ENCODE measurements at regions of chr15 and their contacts with region 1.

Region 1: GRCh38 chr15:25508369-25509002 is 69.7 kb upstream of the UBE3A start:
- DNase-seq: no peak
- H3K4me3 ChIP-seq: no peak overlapping the region
- CTCF ChIP-seq: no peak
- POLR2A ChIP-seq: no peak

Region 2: DNA sequence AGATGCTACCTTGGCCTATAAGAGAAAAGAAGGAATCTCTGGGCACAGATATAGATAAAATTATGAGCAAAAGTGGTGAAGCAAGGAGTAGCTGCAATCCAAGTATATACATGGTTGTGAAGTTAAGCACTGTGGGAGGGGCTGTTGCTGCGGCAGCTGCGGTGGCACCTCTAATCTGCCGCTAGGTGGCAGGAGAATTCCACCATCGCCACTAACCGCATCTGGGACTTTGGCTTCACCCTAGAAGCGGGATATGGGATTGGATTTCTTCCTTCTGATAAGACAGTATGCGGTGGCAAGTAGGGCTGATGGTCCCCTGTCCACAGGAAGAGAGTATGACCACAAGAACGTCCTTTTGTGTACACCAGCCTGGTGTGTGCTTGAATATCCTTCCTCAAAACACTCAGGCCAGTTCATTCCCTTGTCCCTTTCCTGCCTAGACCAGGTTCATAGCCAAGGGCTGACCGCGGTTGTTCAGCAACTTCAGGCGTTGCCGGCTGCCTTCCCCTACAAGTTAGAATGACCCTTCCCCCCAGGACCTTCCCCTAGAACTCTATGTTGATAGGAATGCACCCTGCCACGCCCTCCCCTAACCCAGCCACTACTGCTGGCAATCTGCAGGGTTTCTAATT is 1866.0 kb before region 1 on chr15:
- intact Hi-C with region 1: loop called (anchors 10 kb)
- DNase-seq: peak in 1 of 2 donors; percentile 17
- H3K4me3 ChIP-seq: no peak overlapping the region
- CTCF ChIP-seq: peak in 1 of 3 donors; percentile 37
- POLR2A ChIP-seq: no peak

Region 3: GRCh38 chr15:25378501-25378901 is 130.0 kb before region 1 on chr15:
- intact Hi-C with region 1: no loop called
- DNase-seq: no peak
- H3K4me3 ChIP-seq: no peak overlapping the region
- CTCF ChIP-seq: no peak
- POLR2A ChIP-seq: no peak

Region 4: GRCh38 chr15:25481207-25481859 is 27.2 kb before region 1 on chr15:
- intact Hi-C with region 1: no loop called
- DNase-seq: no peak
- H3K4me3 ChIP-seq: no peak overlapping the region
- CTCF ChIP-seq: no peak
- POLR2A ChIP-seq: no peak

Region 5: DNA sequence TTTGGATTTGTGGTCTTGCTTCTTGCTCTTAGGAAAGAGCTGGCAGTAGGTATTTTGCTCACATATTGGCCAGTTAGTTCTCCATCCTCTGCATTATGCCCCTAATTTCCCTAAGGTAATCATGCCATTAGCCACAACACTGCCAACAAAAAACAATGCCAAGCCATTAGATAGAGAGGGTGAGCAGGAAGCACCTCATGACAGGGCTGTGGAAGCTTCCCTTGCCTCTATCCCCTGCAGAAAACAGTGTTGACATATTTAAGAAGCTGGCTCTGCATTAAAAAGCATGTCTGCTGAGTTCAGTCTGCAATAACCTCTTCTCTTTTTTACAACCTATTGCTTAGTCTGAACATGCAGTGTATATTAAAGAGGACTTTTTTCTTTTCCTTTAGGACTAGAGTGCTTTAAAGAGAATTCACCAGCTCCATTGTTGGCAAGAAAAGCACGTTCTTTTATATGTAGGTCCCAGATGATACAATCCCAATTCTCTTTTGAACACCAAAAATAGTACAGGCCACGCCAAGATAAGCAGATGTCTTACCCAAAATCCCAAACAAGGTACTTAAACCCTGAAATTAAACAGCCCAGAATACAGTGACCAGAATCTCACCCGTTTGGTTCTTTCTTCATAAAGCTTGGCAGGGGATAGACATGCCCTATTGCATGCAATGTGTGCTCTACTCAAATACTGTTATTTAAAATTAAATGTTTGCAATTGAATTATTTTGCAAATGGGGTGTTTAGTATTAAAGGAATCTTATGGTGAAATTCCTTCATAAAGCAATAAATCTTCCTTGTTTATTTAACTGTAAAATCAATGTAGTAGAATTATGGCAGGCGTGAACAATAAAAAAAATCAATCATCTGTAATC is 24.0 kb after region 1 on chr15:
- intact Hi-C with region 1: loop called (anchors 2 kb)
- DNase-seq: no peak
- H3K4me3 ChIP-seq: no peak overlapping the region
- CTCF ChIP-seq: no peak
- POLR2A ChIP-seq: no peak

Region 6: DNA sequence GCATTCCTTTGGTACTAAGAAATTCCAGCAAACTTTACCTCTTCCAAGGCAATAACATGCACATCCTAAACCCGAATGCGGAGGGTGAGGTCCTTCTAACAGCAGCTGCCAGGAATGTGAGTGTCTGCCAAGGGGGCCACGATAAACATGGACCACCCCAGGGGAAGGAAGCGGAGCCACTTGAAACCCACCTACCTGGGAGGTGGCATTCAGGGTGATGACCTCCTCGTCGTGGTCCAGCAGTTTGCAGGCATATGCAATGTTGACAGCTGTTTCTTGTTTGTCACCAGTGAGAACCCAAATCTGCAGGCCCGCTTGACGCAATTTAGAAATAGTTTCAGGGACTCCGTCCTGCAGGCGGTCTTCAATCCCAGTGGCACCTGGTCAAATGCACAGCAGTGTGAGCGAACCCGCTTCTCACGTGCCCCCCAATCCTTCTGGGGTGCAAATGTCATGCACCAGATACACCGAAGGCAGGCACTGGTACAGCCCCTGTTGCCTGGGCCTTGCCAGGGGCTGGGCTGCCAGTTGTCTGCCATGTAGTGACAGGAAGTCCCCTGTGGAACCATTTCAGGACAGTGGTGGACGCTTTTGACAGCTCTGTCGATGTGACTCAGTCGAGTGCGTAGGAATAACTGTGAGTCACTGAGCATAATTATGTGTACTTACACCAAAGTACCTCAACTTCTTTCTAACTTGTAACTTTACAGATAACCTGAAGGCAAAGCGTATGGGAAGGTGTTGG is 193.4 kb after region 1 on chr15:
- intact Hi-C with region 1: loop called (anchors 10 kb)
- DNase-seq: peak in 1 of 2 donors; percentile 36
- H3K4me3 ChIP-seq: no peak overlapping the region
- CTCF ChIP-seq: no peak
- POLR2A ChIP-seq: no peak

Region 7: GRCh38 chr15:25933456-25934158 is 425.1 kb after region 1 on chr15:
- intact Hi-C with region 1: loop called (anchors 10 kb)
- DNase-seq: peak; percentile 49 to 92
- H3K4me3 ChIP-seq: no peak overlapping the region
- CTCF ChIP-seq: no peak
- POLR2A ChIP-seq: no peak